Panc1 (cell line): ENCODE measurements at regions of chr17 and their contacts with region 1.

Region 1: GRCh38 chr17:63919311-63919723 is 678 bp upstream of the GH1 start:
- DNase-seq: peak; percentile 72
- ATAC-seq: peak; percentile 93
- H3K4me3 ChIP-seq: no peak overlapping the region
- H3K27ac ChIP-seq: no peak overlapping the region
- H3K4me1 ChIP-seq: no peaks in the 10 kb centered on the region
- H3K27me3 ChIP-seq: no peaks in the 10 kb centered on the region
- CTCF ChIP-seq: peak; percentile 86

Region 2: GRCh38 chr17:63946440-63947367 is 27.4 kb after region 1 on chr17:
- CTCF ChIA-PET with region 1: interaction called, 14 read pairs
- POLR2A ChIA-PET with region 1: no interaction called
- in situ Hi-C with region 1: no loop called
- intact Hi-C with region 1: no loop called
- DNase-seq: peak; percentile 22
- ATAC-seq: peak; percentile 72
- H3K4me3 ChIP-seq: no peak overlapping the region
- H3K27ac ChIP-seq: no peak overlapping the region
- H3K4me1 ChIP-seq: no peaks in the 10 kb centered on the region
- H3K27me3 ChIP-seq: no peaks in the 10 kb centered on the region
- CTCF ChIP-seq: peak; percentile 82

Region 3: GRCh38 chr17:63961355-63962212 is 42.3 kb after region 1 on chr17:
- CTCF ChIA-PET with region 1: no interaction called
- POLR2A ChIA-PET with region 1: no interaction called
- in situ Hi-C with region 1: no loop called
- intact Hi-C with region 1: no loop called
- DNase-seq: no peak
- ATAC-seq: peak; percentile 64
- H3K4me3 ChIP-seq: no peak overlapping the region
- H3K27ac ChIP-seq: no peak overlapping the region
- H3K4me1 ChIP-seq: no peaks in the 10 kb centered on the region
- H3K27me3 ChIP-seq: no peaks in the 10 kb centered on the region
- CTCF ChIP-seq: no peak

Region 4: GRCh38 chr17:63985387-63986138 is 66.2 kb after region 1 on chr17:
- CTCF ChIA-PET with region 1: interaction called, 11 read pairs
- POLR2A ChIA-PET with region 1: no interaction called
- in situ Hi-C with region 1: no loop called
- intact Hi-C with region 1: loop called (anchors 10 kb)
- DNase-seq: no peak
- ATAC-seq: no peak
- H3K4me3 ChIP-seq: no peak overlapping the region
- H3K27ac ChIP-seq: no peak overlapping the region
- H3K4me1 ChIP-seq: no peaks in the 10 kb centered on the region
- H3K27me3 ChIP-seq: no peaks in the 10 kb centered on the region
- CTCF ChIP-seq: no peak

Region 5: DNA sequence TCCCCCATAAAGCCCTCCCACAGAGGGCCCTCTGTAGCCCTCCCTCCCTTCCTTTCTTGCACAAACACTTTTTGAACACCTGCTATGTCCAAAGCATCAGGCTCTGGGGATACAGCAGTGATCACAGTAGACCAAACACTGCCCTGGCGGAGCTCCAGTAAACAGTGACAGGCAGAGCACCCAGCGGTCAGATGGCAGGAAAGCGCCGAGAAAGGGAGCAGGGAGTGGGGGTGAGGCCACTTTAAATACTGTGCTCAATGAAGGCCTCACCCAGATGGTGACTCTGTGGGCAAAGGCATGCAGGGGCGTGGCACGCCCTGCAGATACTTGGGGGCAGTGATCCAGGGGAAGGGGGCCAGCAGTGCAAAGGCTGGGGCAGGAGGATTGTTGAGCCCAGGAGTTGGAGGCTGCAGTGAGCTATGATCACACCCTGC is 86.4 kb after region 1 on chr17:
- CTCF ChIA-PET with region 1: no interaction called
- POLR2A ChIA-PET with region 1: no interaction called
- in situ Hi-C with region 1: no loop called
- intact Hi-C with region 1: no loop called
- DNase-seq: no peak
- ATAC-seq: no peak; the same call in 1 of the 2 replicates
- H3K4me3 ChIP-seq: no peak overlapping the region
- H3K27ac ChIP-seq: no peak overlapping the region
- H3K4me1 ChIP-seq: no peaks in the 10 kb centered on the region
- H3K27me3 ChIP-seq: no peaks in the 10 kb centered on the region
- CTCF ChIP-seq: no peak

Region 6: GRCh38 chr17:64025732-64026294 is 106.5 kb after region 1 on chr17:
- CTCF ChIA-PET with region 1: interaction called, 4 read pairs
- POLR2A ChIA-PET with region 1: no interaction called
- in situ Hi-C with region 1: no loop called
- intact Hi-C with region 1: loop called (anchors 10 kb)
- DNase-seq: peak; percentile 47
- ATAC-seq: peak; percentile 87
- H3K4me3 ChIP-seq: peak overlapping the region; percentile 6 to 34; a peak in 3 of 4 replicates
- H3K27ac ChIP-seq: no peak overlapping the region
- H3K4me1 ChIP-seq: no peaks in the 10 kb centered on the region
- H3K27me3 ChIP-seq: no peaks in the 10 kb centered on the region
- CTCF ChIP-seq: peak; percentile 94